Activated naive CD4-positive, alpha-beta T cell treated with anti-CD3 and anti-CD28 coated beads for 36 hours (primary cell): ENCODE measurements at regions of chr11 and their contacts with region 1.

Region 1: DNA sequence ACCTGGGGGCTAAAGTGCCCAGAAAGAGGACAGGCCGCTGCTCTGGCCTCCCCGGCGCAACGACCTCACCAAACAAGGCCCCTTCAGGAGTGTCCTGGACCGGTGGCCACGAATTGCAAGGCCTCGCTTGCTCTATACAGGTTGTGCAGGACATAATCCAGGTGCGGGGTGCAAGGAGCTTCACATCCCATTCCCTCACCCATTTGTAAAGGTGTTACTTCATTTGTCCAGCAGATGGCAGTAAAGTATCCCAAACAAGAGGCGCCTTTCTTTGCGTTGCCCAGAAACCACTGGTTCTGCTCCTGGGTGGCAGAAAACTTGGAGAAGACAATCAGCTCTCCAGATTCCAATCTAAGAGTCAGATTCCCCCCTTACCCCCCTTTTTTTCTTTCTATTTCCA is 35.9 kb upstream of the PRDM11 start:
- DNase-seq: peak; percentile 40
- H3K4me3 Mint-ChIP-seq: no peak overlapping the region
- H3K27ac Mint-ChIP-seq: no peak overlapping the region
- H3K4me1 Mint-ChIP-seq: no peaks in the 10 kb centered on the region
- H3K27me3 Mint-ChIP-seq: peaks cover 24% of the 10 kb centered on the region

Region 2: DNA sequence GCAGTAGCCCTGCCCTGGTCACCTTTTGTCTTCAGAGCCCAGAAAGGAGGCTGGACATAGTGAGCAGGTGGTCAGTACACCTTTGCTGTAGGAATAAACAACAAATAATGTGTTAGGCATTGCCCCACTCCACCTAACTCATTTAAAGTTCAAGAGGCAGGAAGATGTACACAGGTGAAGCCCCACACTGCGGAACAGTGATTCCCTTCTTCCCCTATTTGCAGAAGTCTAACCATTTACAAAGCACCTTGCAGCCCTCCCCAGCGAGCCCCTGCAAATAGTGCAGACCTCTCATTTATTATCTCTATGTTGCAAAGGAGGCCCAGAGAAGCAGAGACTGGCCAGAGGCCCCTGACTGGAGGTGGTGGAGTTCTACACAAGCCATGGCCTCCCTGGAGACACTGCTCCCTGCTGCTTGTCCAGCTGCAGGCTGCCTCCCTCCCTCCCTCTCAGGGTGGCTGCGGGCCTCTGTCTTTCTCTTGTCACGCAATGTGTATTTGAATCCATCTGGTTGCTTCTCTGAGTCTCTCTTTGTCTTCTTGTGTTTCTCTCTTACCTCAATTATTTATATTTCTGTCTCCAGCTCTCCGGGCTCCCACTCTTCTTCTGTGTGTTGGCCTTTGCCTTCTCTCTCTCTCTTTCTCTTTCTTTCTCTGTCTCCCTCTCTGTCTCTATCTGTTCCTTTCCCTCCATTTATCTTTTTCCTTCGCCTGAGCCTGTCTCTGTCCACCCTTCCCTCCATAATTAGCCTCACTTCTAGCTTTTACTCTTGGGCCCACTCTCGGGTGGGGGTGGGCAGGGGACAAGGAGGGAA is 23.3 kb before region 1 on chr11:
- CTCF ChIA-PET with region 1: no interaction called
- intact Hi-C with region 1: no loop called
- DNase-seq: no peak
- H3K4me3 Mint-ChIP-seq: no peak overlapping the region
- H3K27ac Mint-ChIP-seq: no peak overlapping the region
- H3K4me1 Mint-ChIP-seq: peaks cover 14% of the 10 kb centered on the region
- H3K27me3 Mint-ChIP-seq: no peaks in the 10 kb centered on the region

Region 3: GRCh38 chr11:45147891-45148675 is 37.5 kb after region 1 on chr11:
- CTCF ChIA-PET with region 1: no interaction called
- intact Hi-C with region 1: no loop called
- DNase-seq: no peak
- H3K4me3 Mint-ChIP-seq: peak overlapping the region; percentile 84
- H3K27ac Mint-ChIP-seq: no peak overlapping the region
- H3K4me1 Mint-ChIP-seq: peaks cover 16% of the 10 kb centered on the region
- H3K27me3 Mint-ChIP-seq: peaks cover 9% of the 10 kb centered on the region

Region 4: DNA sequence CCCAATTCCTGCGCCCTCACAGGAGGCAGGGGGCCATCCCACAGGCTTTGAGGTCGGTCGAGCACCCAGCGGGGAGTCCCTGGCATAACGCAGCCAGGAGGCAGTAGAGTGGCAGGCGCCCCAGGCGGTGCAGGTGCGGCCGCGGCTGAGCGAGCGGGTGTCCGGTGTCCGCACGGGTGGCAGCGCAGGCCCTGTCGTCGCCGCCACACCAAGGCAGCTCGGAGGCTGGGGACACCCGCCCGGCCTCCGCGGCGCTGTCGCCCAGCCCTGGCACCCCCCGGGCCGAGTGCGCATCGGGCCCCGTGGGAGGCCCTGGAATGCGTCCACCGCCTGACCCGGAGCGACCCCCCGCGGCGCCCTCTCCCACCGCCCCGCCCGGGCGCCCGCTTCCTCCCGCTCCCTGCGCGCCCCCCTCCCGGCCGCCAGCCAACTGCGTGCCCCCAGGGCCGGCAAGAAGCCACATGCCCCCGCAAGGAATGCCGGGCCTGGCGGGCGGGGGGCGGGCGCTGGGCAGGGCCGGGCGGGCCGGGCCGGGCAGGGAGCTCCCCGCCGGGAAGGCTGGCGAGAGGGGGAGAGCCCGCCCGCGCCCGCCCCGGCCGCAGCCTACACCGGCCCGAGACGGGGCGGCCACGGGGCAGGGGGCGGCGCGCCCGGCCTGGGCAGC is 69.7 kb after region 1 on chr11:
- CTCF ChIA-PET with region 1: interaction called, 3 read pairs
- intact Hi-C with region 1: loop called (anchors 1 kb)
- DNase-seq: peak; percentile 38
- H3K4me3 Mint-ChIP-seq: peak overlapping the region; percentile 66
- H3K27ac Mint-ChIP-seq: no peak overlapping the region
- H3K4me1 Mint-ChIP-seq: peaks cover 7% of the 10 kb centered on the region
- H3K27me3 Mint-ChIP-seq: peaks cover 21% of the 10 kb centered on the region

Region 5: DNA sequence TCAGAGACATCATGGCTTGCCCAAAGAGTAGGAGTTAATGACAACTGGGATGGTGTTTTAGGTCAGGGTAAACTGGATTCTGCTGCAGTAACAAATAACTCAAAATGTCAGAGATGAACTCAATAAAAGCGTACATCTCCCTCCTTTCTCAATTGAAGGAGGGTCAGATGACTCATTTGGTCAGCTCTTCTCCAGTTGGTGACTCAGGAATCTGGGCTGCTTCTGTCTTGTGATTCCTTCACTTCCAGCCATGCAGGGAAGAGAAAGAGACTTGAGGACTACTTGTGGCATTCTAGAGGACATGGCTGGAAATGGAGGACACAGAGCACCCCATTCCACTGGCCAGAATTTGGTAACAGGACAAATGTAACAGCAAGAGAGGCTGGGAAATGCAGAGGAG is 178.8 kb after region 1 on chr11:
- CTCF ChIA-PET with region 1: interaction called, 35 read pairs
- intact Hi-C with region 1: loop called (anchors 1 kb)
- DNase-seq: no peak
- H3K4me3 Mint-ChIP-seq: no peak overlapping the region
- H3K27ac Mint-ChIP-seq: no peak overlapping the region
- H3K4me1 Mint-ChIP-seq: no peaks in the 10 kb centered on the region
- H3K27me3 Mint-ChIP-seq: peaks cover 46% of the 10 kb centered on the region

Region 6: GRCh38 chr11:45332276-45332934 is 221.8 kb after region 1 on chr11:
- CTCF ChIA-PET with region 1: interaction called, 71 read pairs
- intact Hi-C with region 1: loop called (anchors 1 kb)
- DNase-seq: peak; percentile 47
- H3K4me3 Mint-ChIP-seq: no peak overlapping the region
- H3K27ac Mint-ChIP-seq: no peak overlapping the region
- H3K4me1 Mint-ChIP-seq: no peaks in the 10 kb centered on the region
- H3K27me3 Mint-ChIP-seq: peaks cover 15% of the 10 kb centered on the region